ENCODE measurements at regions of chr3 and their contacts with region 1.

Region 1: GRCh38 chr3:187112934-187113793 is 26.1 kb downstream of the RPL39L start:
- DNase-seq: peak; percentile 48
- ATAC-seq: peak; percentile 86
- H3K4me3 ChIP-seq: no peak overlapping the region
- H3K27ac ChIP-seq: no peak overlapping the region
- H3K4me1 ChIP-seq: no peaks in the 10 kb centered on the region
- H3K27me3 ChIP-seq: no peaks in the 10 kb centered on the region
- CTCF ChIP-seq: peak; percentile 57
- POLR2A ChIP-seq: no peak
- RAD21 ChIP-seq: peak; percentile 56

Region 2: DNA sequence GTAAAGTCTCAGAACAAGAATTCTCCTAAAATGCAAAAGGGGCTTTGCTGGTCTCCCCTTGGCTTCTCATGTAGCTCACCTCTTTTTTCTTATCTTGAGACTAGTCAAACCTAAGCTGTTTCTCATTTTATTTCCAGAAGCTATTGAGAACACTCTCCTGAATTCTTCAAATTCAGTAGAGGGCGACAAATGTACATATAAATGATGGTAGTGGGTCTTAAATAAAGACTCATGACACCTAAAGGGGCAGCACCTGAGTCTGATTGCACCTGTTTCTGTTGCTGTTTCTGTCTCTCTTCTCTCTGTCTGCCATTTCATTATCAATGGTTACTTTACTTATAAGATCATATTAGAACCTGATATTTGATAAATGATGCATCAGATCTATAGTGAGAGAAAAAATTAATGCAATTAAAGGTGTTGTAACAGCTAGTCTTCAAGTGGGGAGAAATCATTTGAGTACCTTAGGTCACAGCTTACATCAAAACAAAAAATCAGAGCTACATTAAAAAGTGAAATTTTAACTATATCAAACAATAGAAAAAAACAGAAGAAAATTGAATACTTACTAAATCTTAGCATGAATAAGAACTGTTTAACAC is 263.7 kb before region 1 on chr3:
- CTCF ChIA-PET with region 1: no interaction called
- POLR2A ChIA-PET with region 1: no interaction called
- dilution Hi-C with region 1: no loop called
- in situ Hi-C with region 1: no loop called
- intact Hi-C with region 1: loop called (anchors 5 kb)
- DNase-seq: peak; percentile 38
- ATAC-seq: 0 out of 2 replicates have a peak, but pooled peaks have one; percentile 37
- H3K4me3 ChIP-seq: no peak overlapping the region
- H3K27ac ChIP-seq: no peak overlapping the region
- H3K4me1 ChIP-seq: no peaks in the 10 kb centered on the region
- H3K27me3 ChIP-seq: peaks cover 32% of the 10 kb centered on the region
- CTCF ChIP-seq: peak; percentile 42
- POLR2A ChIP-seq: no peak
- RAD21 ChIP-seq: peak; percentile 45

Region 3: GRCh38 chr3:187101184-187102072 is 11.7 kb before region 1 on chr3:
- CTCF ChIA-PET with region 1: interaction called, 26 read pairs
- POLR2A ChIA-PET with region 1: no interaction called
- dilution Hi-C with region 1: no loop called
- in situ Hi-C with region 1: no loop called
- intact Hi-C with region 1: no loop called
- DNase-seq: peak; percentile 71
- ATAC-seq: peak; percentile 78
- H3K4me3 ChIP-seq: peak overlapping the region; percentile 41; the same call in 1 of the 2 replicates
- H3K27ac ChIP-seq: peak overlapping the region; percentile 27; the same call in 1 of the 2 replicates
- H3K4me1 ChIP-seq: peaks cover 5% of the 10 kb centered on the region
- H3K27me3 ChIP-seq: no peaks in the 10 kb centered on the region
- CTCF ChIP-seq: no peak
- POLR2A ChIP-seq: no peak
- RAD21 ChIP-seq: no peak